Transverse colon (tissue), 4 donors: ENCODE measurements at regions of chr9 and their contacts with region 1.

Region 1: GRCh38 chr9:126317513-126317912 is 9.1 kb upstream of the MVB12B start:
- DNase-seq: peak; percentile 51
- H3K4me3 ChIP-seq: no peak overlapping the region
- H3K27ac ChIP-seq: no peak overlapping the region
- H3K4me1 ChIP-seq: no peaks in the 10 kb centered on the region
- H3K27me3 ChIP-seq: no peaks in the 10 kb centered on the region
- CTCF ChIP-seq: peak; percentile 40 to 55 (median 55)
- EP300 ChIP-seq: no peak
- POLR2A ChIP-seq: no peak

Region 2: DNA sequence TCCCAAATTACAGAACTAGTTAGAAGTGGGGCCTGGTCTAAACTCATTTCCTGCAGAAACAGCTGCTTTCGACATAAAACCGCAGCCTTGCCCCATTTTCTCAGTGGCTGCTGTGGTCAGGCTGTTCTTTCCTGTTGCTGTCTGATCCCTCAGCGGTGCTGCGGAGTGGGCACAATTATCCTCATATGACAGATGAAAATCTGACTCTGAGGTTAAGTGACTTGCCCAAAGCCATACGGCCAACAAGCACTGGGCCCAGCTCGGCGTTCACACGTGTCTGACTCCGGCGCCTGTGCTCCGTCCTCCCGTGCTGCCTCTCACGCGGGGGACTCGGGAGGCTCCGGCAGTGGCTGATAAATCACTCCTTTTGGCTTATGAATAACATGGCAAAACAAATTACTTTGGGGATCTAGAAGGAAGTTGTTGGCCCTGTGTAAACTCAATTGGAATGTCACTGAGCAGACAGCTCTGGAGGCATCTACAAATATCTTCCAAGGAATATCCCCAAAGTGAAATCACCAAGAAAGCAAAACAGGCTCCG is 153.6 kb after region 1 on chr9:
- in situ Hi-C with region 1: loop called (anchors 10 to 25 kb)
- intact Hi-C with region 1: no loop called
- DNase-seq: peak; percentile 77
- H3K4me3 ChIP-seq: no peak overlapping the region
- H3K27ac ChIP-seq: peak overlapping the region; percentile 44 to 58 (median 53)
- H3K4me1 ChIP-seq: peaks cover 0 to 15% (median 4%) of the 10 kb centered on the region in 4 donors
- H3K27me3 ChIP-seq: no peaks in the 10 kb centered on the region
- CTCF ChIP-seq: no peak
- EP300 ChIP-seq: no peak
- POLR2A ChIP-seq: no peak